Caco-2 (cell line): ENCODE measurements at regions of chr3 and their contacts with region 1.

Region 1: GRCh38 chr3:161851941-161852566 is 355.4 kb downstream of the OTOL1 start:
- DNase-seq: peak; percentile 49 to 70
- H3K4me3 ChIP-seq: no peak overlapping the region
- H3K4me3 Mint-ChIP-seq: no peak overlapping the region
- H3K27ac Mint-ChIP-seq: no peak overlapping the region
- H3K4me1 ChIP-seq: peaks cover 16% of the 10 kb centered on the region; the same call in 1 of the 2 replicates
- H3K4me1 Mint-ChIP-seq: peaks cover 9% of the 10 kb centered on the region
- H3K27me3 ChIP-seq: no peaks in the 10 kb centered on the region
- H3K27me3 Mint-ChIP-seq: no peaks in the 10 kb centered on the region
- CTCF ChIP-seq: peak; percentile 74 to 81

Region 2: DNA sequence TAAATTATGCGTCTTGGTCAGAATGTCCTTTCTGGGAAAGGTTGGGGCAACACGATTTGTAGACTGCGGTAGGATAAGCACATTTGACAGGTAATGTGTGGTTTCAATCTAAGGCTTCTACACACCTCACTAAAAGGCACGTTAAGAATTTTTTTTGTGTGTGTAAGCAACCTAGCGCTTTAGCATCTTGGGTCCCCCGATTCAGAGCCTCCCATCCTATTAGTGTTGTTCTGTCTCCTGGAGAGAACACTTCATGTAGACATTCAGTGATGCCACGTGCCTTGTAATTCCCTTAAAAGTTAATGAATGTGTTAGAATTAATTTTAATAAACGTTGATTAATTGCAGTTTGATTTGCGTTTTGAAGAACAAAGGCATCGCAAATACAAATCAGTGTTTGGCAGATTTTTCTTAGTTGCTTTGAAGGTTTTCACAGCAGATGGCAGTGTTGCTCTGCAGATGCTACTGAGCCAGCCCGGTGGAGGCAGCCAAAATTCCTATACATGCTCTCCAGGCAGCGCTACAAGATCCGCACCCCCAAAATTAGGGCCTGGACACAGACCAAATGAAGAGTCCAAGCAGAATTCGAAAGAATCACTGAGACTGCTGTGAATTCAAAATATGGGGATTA is 291.9 kb before region 1 on chr3:
- CTCF ChIA-PET with region 1: no interaction called
- POLR2A ChIA-PET with region 1: no interaction called
- intact Hi-C with region 1: loop called (anchors 1 kb)
- DNase-seq: peak; percentile 36 to 47
- H3K4me3 ChIP-seq: no peak overlapping the region
- H3K4me3 Mint-ChIP-seq: no peak overlapping the region
- H3K27ac Mint-ChIP-seq: no peak overlapping the region
- H3K4me1 ChIP-seq: no peaks in the 10 kb centered on the region
- H3K4me1 Mint-ChIP-seq: no peaks in the 10 kb centered on the region
- H3K27me3 ChIP-seq: no peaks in the 10 kb centered on the region
- H3K27me3 Mint-ChIP-seq: peaks cover 6% of the 10 kb centered on the region
- CTCF ChIP-seq: peak; percentile 53 to 56

Region 3: DNA sequence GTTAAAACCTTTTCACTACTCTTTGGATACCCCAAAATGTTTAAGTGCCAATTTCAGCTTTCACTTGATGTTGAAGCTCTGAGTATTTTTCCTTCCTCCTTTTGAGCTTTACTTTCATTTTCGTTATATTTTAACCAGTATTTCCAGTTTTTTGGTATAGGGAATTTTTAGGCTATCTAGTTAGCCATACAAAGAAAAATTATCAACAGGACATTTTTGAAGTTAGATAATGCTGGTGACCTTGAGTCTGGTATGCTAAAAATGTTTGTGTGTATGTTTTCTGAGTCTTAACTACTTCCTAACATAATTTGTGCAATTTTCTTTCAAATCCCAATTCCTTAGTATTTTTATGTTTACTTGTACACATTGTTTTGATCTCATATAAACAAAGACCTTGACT is 70.7 kb before region 1 on chr3:
- CTCF ChIA-PET with region 1: no interaction called
- POLR2A ChIA-PET with region 1: no interaction called
- intact Hi-C with region 1: loop called (anchors 5 kb)
- DNase-seq: no peak
- H3K4me3 ChIP-seq: no peak overlapping the region
- H3K4me3 Mint-ChIP-seq: peak overlapping the region; percentile 54
- H3K27ac Mint-ChIP-seq: no peak overlapping the region
- H3K4me1 ChIP-seq: peaks cover 19% of the 10 kb centered on the region
- H3K4me1 Mint-ChIP-seq: peaks cover 6% of the 10 kb centered on the region
- H3K27me3 ChIP-seq: no peaks in the 10 kb centered on the region
- H3K27me3 Mint-ChIP-seq: no peaks in the 10 kb centered on the region
- CTCF ChIP-seq: no peak

Region 4: GRCh38 chr3:161875508-161875907 is 23.5 kb after region 1 on chr3:
- CTCF ChIA-PET with region 1: no interaction called
- POLR2A ChIA-PET with region 1: no interaction called
- intact Hi-C with region 1: loop called (anchors 1 kb)
- DNase-seq: no peak
- H3K4me3 ChIP-seq: no peak overlapping the region
- H3K4me3 Mint-ChIP-seq: no peak overlapping the region
- H3K27ac Mint-ChIP-seq: no peak overlapping the region
- H3K4me1 ChIP-seq: peaks cover 3% of the 10 kb centered on the region; the same call in 1 of the 2 replicates
- H3K4me1 Mint-ChIP-seq: peaks cover 14% of the 10 kb centered on the region
- H3K27me3 ChIP-seq: no peaks in the 10 kb centered on the region
- H3K27me3 Mint-ChIP-seq: peaks cover 3% of the 10 kb centered on the region
- CTCF ChIP-seq: no peak

Region 5: GRCh38 chr3:161914737-161915417 is 62.8 kb after region 1 on chr3:
- CTCF ChIA-PET with region 1: no interaction called
- POLR2A ChIA-PET with region 1: no interaction called
- intact Hi-C with region 1: loop called (anchors 5 kb)
- DNase-seq: peak; percentile 46 to 50
- H3K4me3 ChIP-seq: no peak overlapping the region
- H3K4me3 Mint-ChIP-seq: no peak overlapping the region
- H3K27ac Mint-ChIP-seq: no peak overlapping the region
- H3K4me1 ChIP-seq: no peaks in the 10 kb centered on the region
- H3K4me1 Mint-ChIP-seq: no peaks in the 10 kb centered on the region
- H3K27me3 ChIP-seq: no peaks in the 10 kb centered on the region
- H3K27me3 Mint-ChIP-seq: no peaks in the 10 kb centered on the region
- CTCF ChIP-seq: peak; percentile 29

Region 6: DNA sequence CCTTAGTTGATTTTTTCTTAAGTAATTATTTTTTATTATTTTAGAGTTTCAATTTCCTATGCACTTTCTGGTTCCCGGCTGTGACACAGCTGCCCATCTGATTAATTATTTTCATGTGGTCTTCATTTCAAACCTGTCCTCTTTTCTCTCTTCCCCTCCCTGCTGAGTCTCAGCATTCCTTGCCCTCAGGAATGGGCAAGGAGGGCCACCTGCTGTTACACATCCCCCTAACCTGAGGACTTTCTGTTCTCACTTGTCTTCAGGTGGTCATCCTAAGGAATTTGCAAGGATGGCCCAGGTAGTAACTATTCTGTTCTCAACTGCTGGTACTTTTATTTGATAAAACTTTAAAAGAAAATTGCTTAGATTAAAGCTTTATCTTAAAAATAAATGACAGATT is 189.6 kb after region 1 on chr3:
- CTCF ChIA-PET with region 1: no interaction called
- POLR2A ChIA-PET with region 1: no interaction called
- intact Hi-C with region 1: loop called (anchors 1 kb)
- DNase-seq: no peak
- H3K4me3 ChIP-seq: no peak overlapping the region
- H3K4me3 Mint-ChIP-seq: no peak overlapping the region
- H3K27ac Mint-ChIP-seq: no peak overlapping the region
- H3K4me1 ChIP-seq: no peaks in the 10 kb centered on the region
- H3K4me1 Mint-ChIP-seq: no peaks in the 10 kb centered on the region
- H3K27me3 ChIP-seq: no peaks in the 10 kb centered on the region
- H3K27me3 Mint-ChIP-seq: peaks cover 3% of the 10 kb centered on the region
- CTCF ChIP-seq: no peak